ENCODE measurements at regions of chr20 and their contacts with region 1.

Region 1: GRCh38 chr20:59495894-59496510 is 108.3 kb upstream of the PHACTR3 start:
- DNase-seq: peak; percentile 47 to 77 (median 60)
- ATAC-seq: peak; percentile 59
- H3K4me3 ChIP-seq: no peak overlapping the region
- H3K4me3 Mint-ChIP-seq: no peak overlapping the region
- H3K27ac ChIP-seq: no peak overlapping the region
- H3K27ac Mint-ChIP-seq: no peak overlapping the region
- H3K4me1 ChIP-seq: peaks cover 5% of the 10 kb centered on the region
- H3K4me1 Mint-ChIP-seq: no peaks in the 10 kb centered on the region
- H3K27me3 ChIP-seq: peaks cover 4 to 16% of the 10 kb centered on the region in 2 experiments
- H3K27me3 Mint-ChIP-seq: peaks cover 43% of the 10 kb centered on the region
- CTCF ChIP-seq: peak; percentile 89

Region 2: GRCh38 chr20:58192567-58192966 is 1303.4 kb before region 1 on chr20:
- CTCF ChIA-PET with region 1: no interaction called
- POLR2A ChIA-PET with region 1: no interaction called
- intact Hi-C with region 1: loop called in 1 of 2 experiments (anchors 5 kb)
- DNase-seq: peak in 11 of 14 experiments; percentile 14 to 52 (median 21)
- ATAC-seq: no peak
- H3K4me3 ChIP-seq: no peak overlapping the region
- H3K4me3 Mint-ChIP-seq: no peak overlapping the region
- H3K27ac ChIP-seq: no peak overlapping the region
- H3K27ac Mint-ChIP-seq: no peak overlapping the region
- H3K4me1 ChIP-seq: no peaks in the 10 kb centered on the region
- H3K4me1 Mint-ChIP-seq: no peaks in the 10 kb centered on the region
- H3K27me3 ChIP-seq: peaks cover 0 to 4% of the 10 kb centered on the region in 2 experiments
- H3K27me3 Mint-ChIP-seq: peaks cover 3% of the 10 kb centered on the region
- CTCF ChIP-seq: peak; percentile 66

Region 3: DNA sequence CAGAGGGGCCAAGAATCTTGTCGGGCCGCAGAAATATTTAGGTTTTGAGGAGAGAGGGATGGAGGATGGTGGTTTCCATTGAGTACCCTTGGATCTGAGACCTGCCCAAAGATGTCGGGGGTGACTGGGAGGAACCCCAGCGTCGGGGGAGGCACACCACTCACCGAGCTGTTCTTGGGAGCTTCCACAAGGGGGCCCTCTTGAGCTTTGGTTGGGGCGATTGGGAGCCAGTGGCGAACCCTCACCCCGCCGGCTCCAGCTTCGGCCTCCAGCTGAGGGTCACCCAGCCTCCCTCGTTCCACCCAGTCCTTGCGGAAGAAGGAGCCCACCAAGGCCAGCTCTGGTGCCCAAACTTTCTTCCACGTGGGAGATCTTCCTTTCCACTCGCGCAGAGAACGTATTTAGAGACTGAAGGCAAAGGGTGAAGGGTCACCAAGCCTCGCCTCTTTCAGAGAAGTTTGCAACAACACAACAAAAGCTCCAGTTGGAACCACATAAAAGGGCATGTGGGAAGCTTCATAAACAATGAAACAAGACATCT is 1014.5 kb before region 1 on chr20:
- CTCF ChIA-PET with region 1: interaction called, 3 read pairs
- POLR2A ChIA-PET with region 1: no interaction called
- intact Hi-C with region 1: loop called in 1 of 2 experiments (anchors 10 kb)
- DNase-seq: peak in 13 of 14 experiments; percentile 4 to 80 (median 54)
- ATAC-seq: no peak
- H3K4me3 ChIP-seq: no peak overlapping the region
- H3K4me3 Mint-ChIP-seq: no peak overlapping the region
- H3K27ac ChIP-seq: no peak overlapping the region
- H3K27ac Mint-ChIP-seq: no peak overlapping the region
- H3K4me1 ChIP-seq: peaks cover 6% of the 10 kb centered on the region
- H3K4me1 Mint-ChIP-seq: no peaks in the 10 kb centered on the region
- H3K27me3 ChIP-seq: no peaks in the 10 kb centered on the region
- H3K27me3 Mint-ChIP-seq: peaks cover 37% of the 10 kb centered on the region
- CTCF ChIP-seq: no peak

Region 4: GRCh38 chr20:58864350-58864749 is 631.7 kb before region 1 on chr20:
- CTCF ChIA-PET with region 1: interaction called, 14 read pairs
- POLR2A ChIA-PET with region 1: no interaction called
- intact Hi-C with region 1: loop called (anchors 1 to 2 kb)
- DNase-seq: peak in 3 of 14 experiments; percentile 25 to 55 (median 50)
- ATAC-seq: peak; percentile 69
- H3K4me3 ChIP-seq: no peak overlapping the region
- H3K4me3 Mint-ChIP-seq: no peak overlapping the region
- H3K27ac ChIP-seq: no peak overlapping the region
- H3K27ac Mint-ChIP-seq: no peak overlapping the region
- H3K4me1 ChIP-seq: no peaks in the 10 kb centered on the region
- H3K4me1 Mint-ChIP-seq: no peaks in the 10 kb centered on the region
- H3K27me3 ChIP-seq: peaks cover 0 to 10% of the 10 kb centered on the region in 2 experiments
- H3K27me3 Mint-ChIP-seq: peaks cover 32% of the 10 kb centered on the region
- CTCF ChIP-seq: peak; percentile 34

Region 5: GRCh38 chr20:59512651-59513050 is 16.6 kb after region 1 on chr20:
- CTCF ChIA-PET with region 1: no interaction called
- POLR2A ChIA-PET with region 1: no interaction called
- intact Hi-C with region 1: no loop called
- DNase-seq: no peak
- ATAC-seq: no peak
- H3K4me3 ChIP-seq: no peak overlapping the region
- H3K4me3 Mint-ChIP-seq: no peak overlapping the region
- H3K27ac ChIP-seq: no peak overlapping the region
- H3K27ac Mint-ChIP-seq: no peak overlapping the region
- H3K4me1 ChIP-seq: no peaks in the 10 kb centered on the region
- H3K4me1 Mint-ChIP-seq: no peaks in the 10 kb centered on the region
- H3K27me3 ChIP-seq: peaks cover 22 to 36% of the 10 kb centered on the region in 2 experiments
- H3K27me3 Mint-ChIP-seq: peaks cover 57% of the 10 kb centered on the region
- CTCF ChIP-seq: no peak

Region 6: DNA sequence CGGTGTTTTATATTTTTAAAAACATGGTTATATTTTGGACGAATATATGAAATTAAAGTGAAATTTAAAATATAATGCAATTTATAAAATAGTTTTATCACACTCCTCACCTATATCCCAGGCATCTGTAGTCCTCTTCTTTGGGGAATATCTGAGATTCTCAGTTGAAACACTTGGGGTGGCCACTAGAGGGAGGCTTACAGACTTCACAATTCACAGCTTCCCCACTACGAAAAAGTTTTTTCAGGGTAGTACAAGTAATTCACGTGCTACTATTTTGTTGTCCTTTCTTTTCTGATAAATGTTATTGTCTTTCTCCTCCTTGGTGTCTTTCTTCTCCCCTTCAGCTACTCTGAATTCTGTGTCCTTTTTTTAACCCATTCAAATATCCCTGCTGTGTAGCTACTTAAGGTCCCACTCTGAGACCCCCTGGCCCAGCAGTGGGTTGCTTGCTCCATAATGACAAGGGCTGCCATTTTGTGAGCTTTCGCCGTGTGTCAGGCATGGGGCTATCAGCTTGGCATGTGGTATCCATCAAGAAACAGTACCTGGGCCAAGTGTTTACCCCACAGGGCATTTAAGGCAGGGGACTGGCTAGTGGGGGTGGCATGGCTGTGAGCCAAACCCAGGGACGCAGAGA is 64.7 kb after region 1 on chr20:
- CTCF ChIA-PET with region 1: no interaction called
- POLR2A ChIA-PET with region 1: no interaction called
- intact Hi-C with region 1: no loop called
- DNase-seq: no peak
- ATAC-seq: no peak
- H3K4me3 ChIP-seq: no peak overlapping the region
- H3K4me3 Mint-ChIP-seq: no peak overlapping the region
- H3K27ac ChIP-seq: no peak overlapping the region
- H3K27ac Mint-ChIP-seq: no peak overlapping the region
- H3K4me1 ChIP-seq: no peaks in the 10 kb centered on the region
- H3K4me1 Mint-ChIP-seq: no peaks in the 10 kb centered on the region
- H3K27me3 ChIP-seq: no peaks in the 10 kb centered on the region
- H3K27me3 Mint-ChIP-seq: no peaks in the 10 kb centered on the region
- CTCF ChIP-seq: peak; percentile 58